A549 (cell line): ENCODE measurements at regions of chr9 and their contacts with region 1.

Region 1: GRCh38 chr9:124754289-124754688 is 16.8 kb downstream of the NR6A1 start:
- DNase-seq: peak in 1 of 2 experiments; percentile 40
- ATAC-seq: peak; percentile 76 to 90; a peak in 4 of 6 replicates
- H3K4me3 ChIP-seq: no peak overlapping the region
- H3K27ac ChIP-seq: no peak overlapping the region
- H3K4me1 ChIP-seq: peaks cover 33% of the 10 kb centered on the region
- CTCF ChIP-seq: peak; percentile 62
- EP300 ChIP-seq: no peak
- POLR2A ChIP-seq: no peak
- RAD21 ChIP-seq: peak; percentile 57 to 71

Region 2: DNA sequence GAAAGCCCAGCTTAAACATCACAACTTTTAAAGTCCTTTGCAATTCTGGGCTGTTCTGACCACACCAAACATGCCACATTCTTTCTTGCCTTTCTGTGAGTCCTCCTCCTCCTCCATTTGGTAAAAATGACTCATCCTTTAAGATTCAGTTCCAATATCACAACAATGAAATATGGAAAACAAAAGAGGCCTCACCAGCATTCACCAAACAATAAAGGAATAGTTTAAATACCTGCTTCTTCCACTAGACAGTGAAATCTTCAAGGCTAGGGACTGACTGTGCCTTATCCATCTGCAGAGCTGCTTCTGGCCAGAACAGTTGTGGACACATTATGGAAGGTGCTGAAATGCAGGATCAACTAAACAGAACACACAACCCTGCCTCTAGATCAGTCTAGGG is 19.2 kb before region 1 on chr9:
- CTCF ChIA-PET with region 1: interaction called, 10 read pairs
- POLR2A ChIA-PET with region 1: interaction called, 3 read pairs
- DNase-seq: no peak
- ATAC-seq: peak; percentile 24 to 69; a peak in 3 of 6 replicates
- H3K4me3 ChIP-seq: no peak overlapping the region
- H3K27ac ChIP-seq: peak overlapping the region in 1 of 2 experiments; percentile 50; a peak in 1 of 6 replicates
- H3K4me1 ChIP-seq: peaks cover 20% of the 10 kb centered on the region
- CTCF ChIP-seq: no peak
- EP300 ChIP-seq: no peak
- POLR2A ChIP-seq: no peak
- RAD21 ChIP-seq: no peak

Region 3: DNA sequence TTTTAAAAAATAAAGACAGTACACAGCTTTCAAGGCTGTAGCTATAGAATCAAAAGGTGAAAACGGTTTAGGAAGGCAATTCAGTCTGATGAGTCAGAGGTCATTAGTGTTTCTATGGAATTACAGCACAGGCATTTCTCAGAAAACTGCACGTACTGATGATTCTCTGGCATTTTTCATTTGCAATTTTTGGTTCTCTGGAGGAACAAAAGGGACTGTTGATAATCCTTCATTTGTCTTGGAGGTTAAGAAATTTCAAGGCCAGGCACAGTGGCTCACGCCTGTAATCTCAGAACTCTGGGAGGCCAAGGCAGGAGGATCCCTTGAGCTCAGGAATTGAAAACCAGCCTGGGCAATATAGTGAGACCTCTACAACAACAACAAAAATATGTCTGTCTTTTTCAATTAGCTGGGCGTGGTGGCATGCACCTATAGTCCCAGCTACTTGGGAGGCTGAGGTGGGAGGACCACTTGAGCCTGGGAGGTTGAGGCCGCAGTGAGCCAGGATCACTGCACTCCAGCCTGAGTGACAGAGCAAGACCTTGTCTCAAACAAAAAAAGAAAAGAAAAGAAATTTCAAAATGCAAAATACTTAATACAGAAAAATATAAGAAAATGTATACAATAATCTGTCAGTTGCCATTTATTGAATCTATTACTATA is 10.5 kb before region 1 on chr9:
- CTCF ChIA-PET with region 1: interaction called, 10 read pairs
- POLR2A ChIA-PET with region 1: interaction called, 3 read pairs
- DNase-seq: no peak
- ATAC-seq: no peak
- H3K4me3 ChIP-seq: no peak overlapping the region
- H3K27ac ChIP-seq: no peak overlapping the region
- H3K4me1 ChIP-seq: peaks cover 8% of the 10 kb centered on the region; the same call in 2 of the 3 replicates
- CTCF ChIP-seq: no peak
- EP300 ChIP-seq: no peak
- POLR2A ChIP-seq: no peak
- RAD21 ChIP-seq: no peak

Region 4: GRCh38 chr9:124764774-124765438 is 10.6 kb after region 1 on chr9:
- CTCF ChIA-PET with region 1: interaction called, 84 read pairs
- POLR2A ChIA-PET with region 1: no interaction called
- DNase-seq: peak; percentile 50 to 53
- ATAC-seq: peak; percentile 54 to 76; a peak in 4 of 6 replicates
- H3K4me3 ChIP-seq: no peak overlapping the region
- H3K27ac ChIP-seq: no peak overlapping the region
- H3K4me1 ChIP-seq: peaks cover 22% of the 10 kb centered on the region; the same call in 2 of the 3 replicates
- CTCF ChIP-seq: peak; percentile 50
- EP300 ChIP-seq: no peak
- POLR2A ChIP-seq: no peak
- RAD21 ChIP-seq: peak; percentile 53 to 61

Region 5: GRCh38 chr9:124960409-124960752 is 206.1 kb after region 1 on chr9:
- CTCF ChIA-PET with region 1: no interaction called
- POLR2A ChIA-PET with region 1: no interaction called
- DNase-seq: peak in 1 of 2 experiments; percentile 4
- ATAC-seq: no peak
- H3K4me3 ChIP-seq: no peak overlapping the region
- H3K27ac ChIP-seq: no peak overlapping the region
- H3K4me1 ChIP-seq: no peaks in the 10 kb centered on the region
- CTCF ChIP-seq: no peak
- EP300 ChIP-seq: no peak
- POLR2A ChIP-seq: no peak
- RAD21 ChIP-seq: no peak